ENCODE measurements at regions of chr5 and their contacts with region 1.

Region 1: DNA sequence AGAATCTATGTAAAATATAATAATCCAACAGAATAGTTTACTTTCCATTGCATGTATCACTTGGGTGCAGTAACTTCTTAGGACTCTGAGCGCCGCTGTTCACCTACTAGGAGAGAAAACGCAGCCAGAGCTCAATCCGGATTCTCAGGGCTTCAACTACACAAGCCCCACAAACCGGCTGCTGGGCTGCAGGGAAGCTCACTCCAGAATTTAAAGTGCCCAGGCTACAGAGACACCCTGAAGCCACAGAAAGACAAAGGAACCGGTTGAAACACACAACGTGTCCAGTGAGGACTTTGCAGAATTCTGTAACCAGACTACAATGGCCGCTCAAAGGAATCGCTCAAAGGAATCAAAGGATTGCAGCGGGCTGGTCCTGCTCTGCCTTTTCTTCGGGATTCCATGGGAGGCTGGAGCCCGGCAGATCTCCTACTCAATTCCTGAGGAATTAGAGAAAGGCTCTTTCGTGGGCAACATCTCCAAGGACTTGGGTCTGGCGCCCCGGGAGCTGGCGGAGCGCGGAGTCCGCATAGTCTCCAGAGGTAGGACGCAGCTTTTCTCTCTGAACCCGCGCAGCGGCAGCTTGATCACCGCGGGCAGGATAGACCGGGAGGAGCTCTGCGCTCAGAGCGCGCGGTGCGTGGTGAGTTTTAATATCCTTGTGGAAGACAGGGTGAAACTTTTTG is at the start of gene PCDHGA10:
- DNase-seq: peak; percentile 64 to 87 (median 87)
- H3K4me3 ChIP-seq: peak within 1 kb of the TSS; percentile 27 to 84 (median 68)
- H3K27ac ChIP-seq: no peak within 1 kb of the TSS
- H3K4me1 ChIP-seq: peaks cover 0 to 15% (median 10%) of the 10 kb centered on the region in 4 experiments
- H3K27me3 ChIP-seq: peaks cover 24 to 85% (median 38%) of the 10 kb centered on the region in 5 experiments

Region 2: DNA sequence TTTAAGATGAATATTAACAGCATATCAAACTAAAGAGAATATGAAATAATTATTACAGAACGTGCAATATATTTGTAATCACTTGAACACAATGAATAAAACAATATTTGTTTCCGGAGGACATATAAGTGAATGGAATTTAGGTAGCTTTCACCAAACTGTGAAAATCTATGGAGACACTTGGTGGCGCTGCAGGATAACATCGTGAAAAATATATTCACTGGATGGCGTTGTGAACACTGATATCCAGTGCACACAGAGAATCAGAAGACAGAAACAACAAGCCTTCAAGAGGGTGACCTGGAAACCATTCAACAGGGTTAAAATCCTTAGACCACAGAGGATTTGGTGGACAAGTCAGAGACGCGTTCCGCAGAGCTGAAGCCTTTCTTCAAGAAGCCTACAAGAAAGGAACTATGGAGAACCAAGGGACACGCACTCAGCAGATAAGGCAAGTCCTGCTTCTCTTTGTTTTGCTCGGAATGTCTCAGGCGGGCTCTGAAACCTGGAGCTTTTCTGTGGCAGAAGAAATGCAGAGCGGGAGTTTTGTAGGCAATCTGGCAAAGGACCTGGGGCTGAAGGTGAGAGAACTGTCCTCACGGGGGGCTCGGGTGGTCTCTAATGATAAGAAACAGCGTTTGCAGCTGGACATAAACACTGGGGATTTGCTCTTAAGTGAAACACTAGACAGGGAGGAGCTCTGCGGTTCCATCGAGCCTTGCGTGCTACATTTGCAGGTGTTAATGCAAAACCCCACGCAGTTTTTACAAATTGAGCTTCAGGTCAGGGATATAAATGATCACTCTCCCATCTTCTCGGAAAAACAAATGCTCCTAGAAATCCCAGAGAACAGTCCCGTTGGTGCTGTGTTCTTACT is 213.4 kb before region 1 on chr5 and contains the start of gene PCDHB11:
- CTCF ChIA-PET with region 1: no interaction called
- POLR2A ChIA-PET with region 1: no interaction called
- DNase-seq: peak in 2 of 3 donors; percentile 2 to 3
- H3K4me3 ChIP-seq: peak within 1 kb of the TSS in 1 of 7 experiments; percentile 19
- H3K27ac ChIP-seq: no peak within 1 kb of the TSS
- H3K4me1 ChIP-seq: no peaks in the 10 kb centered on the region
- H3K27me3 ChIP-seq: peaks cover 3 to 31% (median 6%) of the 10 kb centered on the region in 5 experiments

Region 3: GRCh38 chr5:141320225-141321169 is 92.5 kb before region 1 on chr5 and contains the start of gene TAF7:
- CTCF ChIA-PET with region 1: interaction called, 12 read pairs
- POLR2A ChIA-PET with region 1: no interaction called
- DNase-seq: peak; percentile 96 to 98 (median 97)
- H3K4me3 ChIP-seq: peak within 1 kb of the TSS; percentile 62 to 97 (median 87)
- H3K27ac ChIP-seq: peak within 1 kb of the TSS; percentile 99
- H3K4me1 ChIP-seq: peaks cover 0 to 5% (median 0%) of the 10 kb centered on the region in 4 experiments
- H3K27me3 ChIP-seq: no peaks in the 10 kb centered on the region

Region 4: DNA sequence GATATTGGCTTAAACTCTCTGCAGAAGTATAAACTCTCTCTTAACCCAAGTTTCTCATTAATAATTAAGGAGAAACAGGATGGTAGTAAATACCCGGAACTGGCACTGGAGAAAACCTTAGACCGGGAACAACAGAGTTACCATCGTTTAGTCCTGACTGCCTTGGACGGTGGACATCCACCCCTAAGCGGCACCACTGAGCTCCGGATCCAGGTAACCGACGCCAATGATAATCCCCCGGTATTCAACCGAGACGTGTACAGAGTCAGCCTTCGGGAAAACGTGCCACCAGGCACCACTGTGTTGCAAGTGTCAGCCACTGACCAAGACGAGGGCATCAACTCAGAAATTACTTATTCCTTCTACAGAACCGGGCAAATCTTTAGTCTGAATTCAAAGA is 14.4 kb before region 1 on chr5:
- CTCF ChIA-PET with region 1: interaction called, 20 read pairs
- POLR2A ChIA-PET with region 1: no interaction called
- DNase-seq: no peak
- H3K4me3 ChIP-seq: peak overlapping the region in 1 of 7 experiments; percentile 28
- H3K27ac ChIP-seq: no peak overlapping the region
- H3K4me1 ChIP-seq: no peaks in the 10 kb centered on the region
- H3K27me3 ChIP-seq: peaks cover 24 to 70% (median 28%) of the 10 kb centered on the region in 5 experiments

Region 5: DNA sequence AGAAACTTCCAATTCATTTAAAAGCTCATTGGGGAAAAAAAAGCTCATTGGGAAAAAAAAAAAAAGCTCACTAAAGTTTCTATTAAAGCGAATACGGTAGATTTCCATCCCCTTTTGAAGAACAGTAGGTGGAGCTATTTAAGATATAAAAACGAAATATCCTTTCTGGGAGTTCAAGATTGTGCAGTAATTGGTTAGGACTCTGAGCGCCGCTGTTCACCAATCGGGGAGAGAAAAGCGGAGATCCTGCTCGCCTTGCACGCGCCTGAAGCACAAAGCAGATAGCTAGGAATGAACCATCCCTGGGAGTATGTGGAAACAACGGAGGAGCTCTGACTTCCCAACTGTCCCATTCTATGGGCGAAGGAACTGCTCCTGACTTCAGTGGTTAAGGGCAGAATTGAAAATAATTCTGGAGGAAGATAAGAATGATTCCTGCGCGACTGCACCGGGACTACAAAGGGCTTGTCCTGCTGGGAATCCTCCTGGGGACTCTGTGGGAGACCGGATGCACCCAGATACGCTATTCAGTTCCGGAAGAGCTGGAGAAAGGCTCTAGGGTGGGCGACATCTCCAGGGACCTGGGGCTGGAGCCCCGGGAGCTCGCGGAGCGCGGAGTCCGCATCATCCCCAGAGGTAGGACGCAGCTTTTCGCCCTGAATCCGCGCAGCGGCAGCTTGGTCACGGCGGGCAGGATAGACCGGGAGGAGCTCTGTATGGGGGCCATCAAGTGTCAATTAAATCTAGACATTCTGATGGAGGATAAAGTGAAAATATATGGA is 17.5 kb after region 1 on chr5 and contains the start of gene PCDHGA12:
- CTCF ChIA-PET with region 1: interaction called, 53 read pairs
- POLR2A ChIA-PET with region 1: no interaction called
- DNase-seq: peak; percentile 82 to 88 (median 86)
- H3K4me3 ChIP-seq: peak within 1 kb of the TSS in 6 of 7 experiments; percentile 21 to 56 (median 48)
- H3K27ac ChIP-seq: no peak within 1 kb of the TSS
- H3K4me1 ChIP-seq: peaks cover 2 to 6% (median 5%) of the 10 kb centered on the region in 4 experiments
- H3K27me3 ChIP-seq: peaks cover 8 to 58% (median 25%) of the 10 kb centered on the region in 5 experiments

Region 6: DNA sequence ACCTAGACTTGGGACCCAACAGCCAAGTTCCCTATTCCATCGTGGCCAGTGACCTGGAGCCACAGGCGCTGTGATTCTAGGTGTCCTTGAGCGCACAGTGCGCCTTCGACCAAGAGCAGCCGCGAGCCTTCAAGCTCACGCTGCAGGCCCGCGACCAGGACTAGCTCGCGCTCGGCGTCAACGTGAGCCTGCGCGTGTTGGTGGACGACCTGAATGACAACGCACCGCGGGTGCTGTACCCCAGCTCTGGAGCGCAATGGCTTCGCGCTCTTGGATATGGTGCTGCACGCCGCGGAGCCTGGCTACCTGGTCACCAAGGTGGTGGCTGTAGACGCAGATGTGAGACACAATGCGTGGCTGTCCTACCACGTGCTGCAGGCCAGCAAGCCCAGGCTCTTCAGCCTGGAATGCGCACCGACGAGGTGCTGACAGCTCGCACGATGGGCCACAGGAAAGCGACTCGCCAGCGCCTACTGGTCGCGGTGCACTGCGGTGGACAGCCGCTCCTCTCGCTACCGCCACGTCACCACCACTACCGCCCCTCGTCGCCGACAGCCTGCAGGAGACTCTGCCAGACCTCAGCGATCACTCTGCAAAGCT is 28.7 kb after region 1 on chr5:
- CTCF ChIA-PET with region 1: no interaction called
- POLR2A ChIA-PET with region 1: no interaction called
- DNase-seq: no peak
- H3K4me3 ChIP-seq: no peak overlapping the region
- H3K27ac ChIP-seq: no peak overlapping the region
- H3K4me1 ChIP-seq: no peaks in the 10 kb centered on the region
- H3K27me3 ChIP-seq: peaks cover 0 to 12% (median 0%) of the 10 kb centered on the region in 5 experiments

Region 7: DNA sequence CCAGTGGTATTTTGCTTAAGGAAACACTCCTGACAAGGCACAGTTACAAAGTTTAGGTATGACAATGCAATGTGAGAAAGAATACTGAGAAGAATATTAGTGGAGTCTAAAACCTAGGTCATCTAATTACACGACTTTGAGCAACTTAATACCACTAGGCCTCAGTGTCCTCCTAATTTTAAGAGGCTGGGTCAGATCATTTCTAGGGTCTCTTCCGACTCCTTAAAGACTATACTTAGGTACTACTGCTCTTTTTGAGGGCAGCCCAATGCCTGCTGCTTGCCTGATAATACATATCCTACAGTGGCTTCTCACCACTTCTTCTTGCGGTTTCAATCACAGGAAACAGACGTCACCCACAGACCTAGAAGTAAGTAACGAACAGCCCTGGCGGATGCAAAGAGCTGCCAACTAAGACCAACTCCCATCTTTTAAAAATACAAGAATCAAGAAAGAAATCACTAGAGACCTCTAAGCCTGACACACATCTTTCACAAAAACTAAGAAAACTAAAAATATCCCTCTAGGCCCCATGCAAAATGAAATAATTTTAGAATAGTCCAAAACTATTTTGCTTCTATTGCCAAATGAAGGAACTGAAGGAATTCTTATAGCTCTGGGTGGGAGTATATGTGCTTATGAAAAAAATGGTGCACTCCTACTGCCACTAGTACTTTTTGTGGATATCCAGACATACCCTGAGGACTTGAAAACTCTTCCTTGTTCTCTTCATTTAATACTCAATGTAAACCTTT is 192.7 kb after region 1 on chr5:
- CTCF ChIA-PET with region 1: no interaction called
- POLR2A ChIA-PET with region 1: no interaction called
- DNase-seq: peak; percentile 97 to 100 (median 99)
- H3K4me3 ChIP-seq: peak overlapping the region in 4 of 7 experiments; percentile 33 to 56 (median 46)
- H3K27ac ChIP-seq: peak overlapping the region in 1 of 2 experiments; percentile 74
- H3K4me1 ChIP-seq: peaks cover 32 to 63% (median 45%) of the 10 kb centered on the region in 4 experiments
- H3K27me3 ChIP-seq: no peaks in the 10 kb centered on the region

Measured in common myeloid progenitor, CD34-positive (primary cell).